ENCODE measurements at regions of chr11 and their contacts with region 1.

Region 1: GRCh38 chr11:75577207-75577606 is 15.2 kb downstream of the SERPINH1 start:
- DNase-seq: peak in 8 of 9 donors; percentile 33 to 55 (median 44)
- ATAC-seq: peak; percentile 59
- H3K4me3 ChIP-seq: no peak overlapping the region
- H3K4me3 Mint-ChIP-seq: no peak overlapping the region
- H3K27ac ChIP-seq: no peak overlapping the region
- H3K27ac Mint-ChIP-seq: no peak overlapping the region
- H3K4me1 ChIP-seq: peaks cover 3% of the 10 kb centered on the region in 2 donors
- H3K4me1 Mint-ChIP-seq: peaks cover 2 to 14% (median 8%) of the 10 kb centered on the region in 7 donors
- H3K27me3 ChIP-seq: no peaks in the 10 kb centered on the region
- H3K27me3 Mint-ChIP-seq: peaks cover 0 to 17% (median 11%) of the 10 kb centered on the region in 5 donors

Region 2: GRCh38 chr11:75445315-75445953 is 131.8 kb before region 1 on chr11:
- CTCF ChIA-PET with region 1: interaction called, 8 read pairs
- POLR2A ChIA-PET with region 1: no interaction called
- intact Hi-C with region 1: loop called in 1 of 2 experiments (anchors 1 kb)
- DNase-seq: peak; percentile 38 to 76 (median 66)
- ATAC-seq: peak; percentile 90
- H3K4me3 ChIP-seq: no peak overlapping the region
- H3K4me3 Mint-ChIP-seq: no peak overlapping the region
- H3K27ac ChIP-seq: no peak overlapping the region
- H3K27ac Mint-ChIP-seq: no peak overlapping the region
- H3K4me1 ChIP-seq: no peaks in the 10 kb centered on the region
- H3K4me1 Mint-ChIP-seq: peaks cover 0 to 3% (median 0%) of the 10 kb centered on the region in 7 donors
- H3K27me3 ChIP-seq: no peaks in the 10 kb centered on the region
- H3K27me3 Mint-ChIP-seq: no peaks in the 10 kb centered on the region

Region 3: DNA sequence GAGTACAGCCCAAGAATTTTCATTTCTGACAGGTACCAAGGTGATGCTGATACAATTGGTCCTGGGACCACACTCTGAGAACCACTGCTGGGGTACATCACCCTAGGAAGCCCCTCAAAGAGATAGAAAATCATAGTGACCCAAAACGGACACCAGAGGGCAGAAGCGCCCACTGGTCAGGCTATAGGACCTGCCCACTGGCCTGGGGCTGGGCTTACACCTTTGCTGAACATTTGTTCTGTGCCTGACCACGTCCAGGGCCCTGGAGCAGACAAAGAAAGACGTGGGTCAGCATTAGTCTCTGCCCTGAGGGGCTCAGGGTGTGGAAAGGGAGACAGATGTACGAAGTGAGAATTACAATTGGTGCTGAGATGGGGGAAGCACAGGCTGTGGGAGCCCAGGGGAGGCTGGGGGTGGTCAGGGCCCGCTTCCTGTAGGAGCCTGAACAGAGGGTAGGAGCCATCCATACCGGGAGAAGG is 29.6 kb before region 1 on chr11:
- CTCF ChIA-PET with region 1: no interaction called
- POLR2A ChIA-PET with region 1: no interaction called
- intact Hi-C with region 1: loop called (anchors 1 kb)
- DNase-seq: no peak
- ATAC-seq: peak; percentile 67
- H3K4me3 ChIP-seq: no peak overlapping the region
- H3K4me3 Mint-ChIP-seq: no peak overlapping the region
- H3K27ac ChIP-seq: no peak overlapping the region
- H3K27ac Mint-ChIP-seq: no peak overlapping the region
- H3K4me1 ChIP-seq: no peaks in the 10 kb centered on the region
- H3K4me1 Mint-ChIP-seq: peaks cover 0 to 7% (median 0%) of the 10 kb centered on the region in 7 donors
- H3K27me3 ChIP-seq: no peaks in the 10 kb centered on the region
- H3K27me3 Mint-ChIP-seq: peaks cover 0 to 4% (median 3%) of the 10 kb centered on the region in 5 donors

Region 4: GRCh38 chr11:75562048-75562835 is 15.0 kb before region 1 on chr11 and contains the start of gene SERPINH1:
- CTCF ChIA-PET with region 1: interaction called, 12 read pairs
- POLR2A ChIA-PET with region 1: interaction called, 4 read pairs
- intact Hi-C with region 1: no loop called
- DNase-seq: peak; percentile 29 to 73 (median 45)
- ATAC-seq: peak; percentile 80
- H3K4me3 ChIP-seq: peak within 1 kb of the TSS; percentile 91
- H3K4me3 Mint-ChIP-seq: peak within 1 kb of the TSS; percentile 94 to 99 (median 99)
- H3K27ac ChIP-seq: peak within 1 kb of the TSS; percentile 86
- H3K27ac Mint-ChIP-seq: peak within 1 kb of the TSS; percentile 87 to 97 (median 95)
- H3K4me1 ChIP-seq: peaks cover 15 to 22% of the 10 kb centered on the region in 2 donors
- H3K4me1 Mint-ChIP-seq: peaks cover 18 to 46% (median 32%) of the 10 kb centered on the region in 7 donors
- H3K27me3 ChIP-seq: no peaks in the 10 kb centered on the region
- H3K27me3 Mint-ChIP-seq: peaks cover 0 to under 1% (median 0%) of the 10 kb centered on the region in 5 donors
- total RNA-seq, gene SERPINH1: 5.1 to 19.9 (median 13.2) TPM

Measured in naive thymus-derived CD4-positive, alpha-beta T cell (primary cell).